Ovary (tissue), 10 donors: ENCODE measurements at regions of chr4 and their contacts with region 1.

Region 1: DNA sequence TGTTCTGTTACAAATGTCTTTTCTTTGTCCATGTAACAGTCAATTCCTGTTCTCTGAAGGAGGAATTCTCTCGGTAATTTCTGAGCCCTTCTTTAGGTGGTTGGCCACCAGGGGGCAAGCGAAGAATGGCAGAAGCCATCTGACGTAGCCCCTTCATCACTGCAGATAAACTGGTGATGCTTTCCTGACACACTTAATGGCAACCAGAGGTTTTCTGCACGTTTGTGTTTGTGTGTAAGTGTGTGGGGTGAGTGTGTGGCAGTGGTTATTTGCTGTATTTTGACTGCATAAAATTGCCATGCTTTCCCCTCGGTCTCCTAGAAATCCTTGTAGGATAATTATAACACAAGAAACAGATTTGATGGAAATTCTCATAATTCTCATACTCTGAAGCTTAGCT is 64.8 kb upstream of the STOX2 start:
- DNase-seq: peak; percentile 72 to 90 (median 87)
- H3K4me3 ChIP-seq: no peak overlapping the region
- H3K27ac ChIP-seq: no peak overlapping the region
- H3K4me1 ChIP-seq: no peaks in the 10 kb centered on the region
- H3K27me3 ChIP-seq: no peaks in the 10 kb centered on the region
- CTCF ChIP-seq: peak; percentile 74 to 86 (median 84)
- EP300 ChIP-seq: no peak
- POLR2A ChIP-seq: no peak

Region 2: GRCh38 chr4:183471946-183472708 is 368.2 kb before region 1 on chr4:
- intact Hi-C with region 1: loop called in 1 of 4 experiments (anchors 10 kb)
- DNase-seq: peak; percentile 87 to 96 (median 91)
- H3K4me3 ChIP-seq: peak overlapping the region; percentile 4
- H3K27ac ChIP-seq: no peak overlapping the region
- H3K4me1 ChIP-seq: no peaks in the 10 kb centered on the region
- H3K27me3 ChIP-seq: no peaks in the 10 kb centered on the region
- CTCF ChIP-seq: peak; percentile 63 to 85 (median 82)
- EP300 ChIP-seq: no peak
- POLR2A ChIP-seq: no peak

Region 3: GRCh38 chr4:183773790-183774189 is 66.5 kb before region 1 on chr4:
- intact Hi-C with region 1: no loop called
- DNase-seq: no peak
- H3K4me3 ChIP-seq: no peak overlapping the region
- H3K27ac ChIP-seq: no peak overlapping the region
- H3K4me1 ChIP-seq: no peaks in the 10 kb centered on the region
- H3K27me3 ChIP-seq: no peaks in the 10 kb centered on the region
- CTCF ChIP-seq: no peak
- EP300 ChIP-seq: no peak
- POLR2A ChIP-seq: no peak

Region 4: GRCh38 chr4:183996868-183997267 is 156.6 kb after region 1 on chr4:
- intact Hi-C with region 1: no loop called
- DNase-seq: no peak
- H3K4me3 ChIP-seq: no peak overlapping the region
- H3K27ac ChIP-seq: no peak overlapping the region
- H3K4me1 ChIP-seq: peaks cover 2% of the 10 kb centered on the region
- H3K27me3 ChIP-seq: no peaks in the 10 kb centered on the region
- CTCF ChIP-seq: no peak
- EP300 ChIP-seq: no peak
- POLR2A ChIP-seq: no peak

Region 5: DNA sequence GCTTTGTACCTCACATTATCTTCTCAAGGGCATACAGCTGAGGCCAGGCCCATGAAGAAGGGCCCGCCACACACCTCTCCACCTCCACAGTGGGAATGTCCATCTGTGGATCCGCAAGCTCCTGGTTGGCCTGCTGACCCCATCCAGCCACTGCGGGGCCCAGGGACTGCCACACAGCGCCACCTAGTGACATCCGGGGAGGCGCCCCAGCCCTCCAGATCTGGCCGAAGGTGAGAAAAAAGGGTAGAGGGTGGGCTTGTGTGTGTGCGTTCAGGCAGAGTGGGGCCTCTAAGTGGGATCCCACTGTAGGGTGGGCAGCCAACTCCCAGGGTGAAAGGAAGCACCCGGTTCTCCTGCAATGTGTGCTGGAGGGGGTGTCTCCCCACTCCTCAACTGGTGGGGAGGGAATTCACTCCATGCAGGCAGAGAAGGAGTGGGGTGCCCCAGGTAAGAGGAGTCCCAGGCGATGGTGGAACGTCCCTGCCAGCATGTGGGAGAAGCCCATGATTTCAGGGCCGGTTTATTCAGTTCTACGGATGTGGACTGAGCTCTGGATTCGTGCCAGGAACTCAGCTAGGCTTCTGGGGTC is 260.1 kb after region 1 on chr4:
- intact Hi-C with region 1: loop called in 2 of 4 experiments (anchors 2 to 5 kb)
- DNase-seq: peak; percentile 20 to 79 (median 53)
- H3K4me3 ChIP-seq: no peak overlapping the region
- H3K27ac ChIP-seq: no peak overlapping the region
- H3K4me1 ChIP-seq: peaks cover 5% of the 10 kb centered on the region
- H3K27me3 ChIP-seq: no peaks in the 10 kb centered on the region
- CTCF ChIP-seq: peak in 2 of 3 donors; percentile 16 to 22
- EP300 ChIP-seq: no peak
- POLR2A ChIP-seq: no peak

Region 6: GRCh38 chr4:184250795-184251669 is 410.7 kb after region 1 on chr4:
- intact Hi-C with region 1: loop called in 2 of 4 experiments (anchors 5 to 10 kb)
- DNase-seq: no peak
- H3K4me3 ChIP-seq: no peak overlapping the region
- H3K27ac ChIP-seq: no peak overlapping the region
- H3K4me1 ChIP-seq: no peaks in the 10 kb centered on the region
- H3K27me3 ChIP-seq: no peaks in the 10 kb centered on the region
- CTCF ChIP-seq: peak; percentile 17 to 50 (median 21)
- EP300 ChIP-seq: no peak
- POLR2A ChIP-seq: no peak